ENCODE measurements at regions of chr1 and their contacts with region 1.

Region 1: GRCh38 chr1:175154629-175155472 is 37.7 kb downstream of the KIAA0040 start:
- DNase-seq: peak; percentile 57 to 85 (median 72)
- ATAC-seq: peak; percentile 27 to 66 (median 56)
- H3K4me3 ChIP-seq: no peak overlapping the region
- H3K27ac ChIP-seq: no peak overlapping the region
- H3K4me1 ChIP-seq: peaks cover 0 to 18% (median 4%) of the 10 kb centered on the region in 12 donors
- H3K27me3 ChIP-seq: peaks cover 0 to 6% (median 0%) of the 10 kb centered on the region in 9 donors
- CTCF ChIP-seq: peak; percentile 88 to 95 (median 92)
- POLR2A ChIP-seq: no peak

Region 2: DNA sequence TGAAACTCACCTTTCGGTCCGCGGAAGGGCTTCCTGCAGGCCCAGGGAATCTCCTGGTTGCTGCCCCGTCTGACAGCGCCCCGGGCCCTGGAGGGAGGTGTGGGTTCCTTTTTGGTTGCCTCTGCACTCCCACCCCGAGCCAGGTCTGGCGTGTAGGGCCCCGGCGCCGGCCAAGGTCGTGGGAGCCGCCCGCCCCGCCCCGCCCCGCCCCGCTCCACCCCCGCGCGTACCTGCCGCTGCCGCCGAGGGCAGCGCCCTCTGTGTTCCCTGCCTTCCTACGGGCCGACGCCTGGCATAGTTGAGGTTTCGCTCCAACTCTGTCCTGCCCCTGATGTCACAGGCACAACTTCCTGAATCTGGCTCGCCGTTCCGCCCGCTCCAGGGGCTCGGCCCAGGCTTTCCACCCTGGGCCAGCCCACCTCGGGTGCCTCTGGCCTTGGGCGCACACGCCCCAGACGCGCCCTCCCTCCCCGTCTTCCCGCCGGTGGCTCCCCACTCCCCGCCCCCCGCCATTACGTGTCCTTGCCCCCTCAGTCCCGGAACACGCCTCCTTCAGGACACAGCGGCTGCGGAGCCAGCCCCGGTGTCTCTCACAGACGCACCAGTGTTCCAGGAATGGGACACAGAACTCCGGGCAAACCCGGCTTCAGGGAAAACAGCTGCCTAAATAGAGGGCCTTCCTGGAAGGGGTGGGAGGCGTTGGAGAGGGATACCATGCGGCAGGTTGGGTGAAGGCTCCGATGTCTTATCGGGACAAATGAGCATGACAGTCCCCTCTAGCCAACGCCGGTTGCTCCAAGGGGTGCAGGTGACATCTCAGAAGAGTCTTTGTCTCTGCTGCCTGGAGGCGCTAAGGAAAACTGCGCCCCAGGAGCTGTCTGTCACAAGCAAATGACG is 38.0 kb after region 1 on chr1 and contains the start of gene KIAA0040:
- intact Hi-C with region 1: loop called in 4 of 10 experiments (anchors 5 kb)
- DNase-seq: peak; percentile 79 to 90 (median 86)
- ATAC-seq: peak; percentile 83 to 90 (median 86)
- H3K4me3 ChIP-seq: peak within 1 kb of the TSS; percentile 57 to 93 (median 74)
- H3K27ac ChIP-seq: peak within 1 kb of the TSS; percentile 84 to 95 (median 90)
- H3K4me1 ChIP-seq: peaks cover 0 to 53% (median 31%) of the 10 kb centered on the region in 12 donors
- H3K27me3 ChIP-seq: no peaks in the 10 kb centered on the region
- CTCF ChIP-seq: peak in 5 of 12 donors; percentile 19 to 40 (median 30)
- POLR2A ChIP-seq: peak in 1 of 2 donors; percentile 28
- total RNA-seq, gene KIAA0040: 10.0 to 45.3 (median 12.9) TPM

Region 3: GRCh38 chr1:175319418-175320230 is 164.8 kb after region 1 on chr1:
- intact Hi-C with region 1: loop called (anchors 1 to 2 kb)
- DNase-seq: peak; percentile 76 to 85 (median 83)
- ATAC-seq: peak; percentile 70 to 86 (median 86)
- H3K4me3 ChIP-seq: no peak overlapping the region
- H3K27ac ChIP-seq: peak overlapping the region in 9 of 12 donors; percentile 10 to 83 (median 71)
- H3K4me1 ChIP-seq: peaks cover 0 to 30% (median 19%) of the 10 kb centered on the region in 12 donors
- H3K27me3 ChIP-seq: no peaks in the 10 kb centered on the region
- CTCF ChIP-seq: peak; percentile 81 to 93 (median 90)
- POLR2A ChIP-seq: no peak

Region 4: GRCh38 chr1:175757381-175758015 is 602.6 kb after region 1 on chr1:
- intact Hi-C with region 1: loop called in 1 of 10 experiments (anchors 10 kb)
- DNase-seq: no peak
- ATAC-seq: peak in 3 of 4 donors; percentile 50 to 71 (median 57)
- H3K4me3 ChIP-seq: no peak overlapping the region
- H3K27ac ChIP-seq: no peak overlapping the region
- H3K4me1 ChIP-seq: no peaks in the 10 kb centered on the region
- H3K27me3 ChIP-seq: no peaks in the 10 kb centered on the region
- CTCF ChIP-seq: peak; percentile 46 to 77 (median 57)
- POLR2A ChIP-seq: no peak

Region 5: GRCh38 chr1:176073524-176074157 is 918.8 kb after region 1 on chr1:
- intact Hi-C with region 1: loop called in 7 of 10 experiments (anchors 2 to 10 kb)
- DNase-seq: peak in 2 of 5 donors; percentile 32 to 41
- ATAC-seq: peak in 3 of 4 donors; percentile 67 to 78 (median 71)
- H3K4me3 ChIP-seq: no peak overlapping the region
- H3K27ac ChIP-seq: no peak overlapping the region
- H3K4me1 ChIP-seq: peaks cover 0 to 7% (median 0%) of the 10 kb centered on the region in 12 donors
- H3K27me3 ChIP-seq: no peaks in the 10 kb centered on the region
- CTCF ChIP-seq: peak; percentile 59 to 85 (median 71)
- POLR2A ChIP-seq: no peak

Measured in heart left ventricle (tissue), 16 donors.